MCF 10A (cell line): ENCODE measurements at regions of chr21 and their contacts with region 1.

Region 1: GRCh38 chr21:36630485-36631206 is 68.3 kb upstream of the SIM2 start:
- DNase-seq: peak; percentile 71
- H3K4me3 Mint-ChIP-seq: no peak overlapping the region
- H3K27ac Mint-ChIP-seq: no peak overlapping the region
- H3K4me1 Mint-ChIP-seq: no peaks in the 10 kb centered on the region
- H3K27me3 Mint-ChIP-seq: no peaks in the 10 kb centered on the region
- CTCF ChIP-seq: peak; percentile 86

Region 2: GRCh38 chr21:36288651-36289243 is 341.9 kb before region 1 on chr21:
- CTCF ChIA-PET with region 1: no interaction called
- POLR2A ChIA-PET with region 1: no interaction called
- intact Hi-C with region 1: no loop called
- DNase-seq: no peak
- H3K4me3 Mint-ChIP-seq: no peak overlapping the region
- H3K27ac Mint-ChIP-seq: no peak overlapping the region
- H3K4me1 Mint-ChIP-seq: no peaks in the 10 kb centered on the region
- H3K27me3 Mint-ChIP-seq: no peaks in the 10 kb centered on the region
- CTCF ChIP-seq: no peak

Region 3: GRCh38 chr21:36504067-36505058 is 126.3 kb before region 1 on chr21:
- CTCF ChIA-PET with region 1: interaction called, 12 read pairs
- POLR2A ChIA-PET with region 1: no interaction called
- intact Hi-C with region 1: no loop called
- DNase-seq: peak; percentile 57
- H3K4me3 Mint-ChIP-seq: no peak overlapping the region
- H3K27ac Mint-ChIP-seq: no peak overlapping the region
- H3K4me1 Mint-ChIP-seq: peaks cover 6% of the 10 kb centered on the region
- H3K27me3 Mint-ChIP-seq: no peaks in the 10 kb centered on the region
- CTCF ChIP-seq: peak; percentile 83

Region 4: GRCh38 chr21:36615274-36615964 is 15.2 kb before region 1 on chr21:
- CTCF ChIA-PET with region 1: interaction called, 15 read pairs
- POLR2A ChIA-PET with region 1: no interaction called
- intact Hi-C with region 1: no loop called
- DNase-seq: no peak
- H3K4me3 Mint-ChIP-seq: no peak overlapping the region
- H3K27ac Mint-ChIP-seq: no peak overlapping the region
- H3K4me1 Mint-ChIP-seq: peaks cover 3% of the 10 kb centered on the region
- H3K27me3 Mint-ChIP-seq: peaks cover 69% of the 10 kb centered on the region
- CTCF ChIP-seq: no peak

Region 5: GRCh38 chr21:36684957-36685714 is 54.5 kb after region 1 on chr21:
- CTCF ChIA-PET with region 1: interaction called, 12 read pairs
- POLR2A ChIA-PET with region 1: no interaction called
- intact Hi-C with region 1: no loop called
- DNase-seq: no peak
- H3K4me3 Mint-ChIP-seq: no peak overlapping the region
- H3K27ac Mint-ChIP-seq: no peak overlapping the region
- H3K4me1 Mint-ChIP-seq: no peaks in the 10 kb centered on the region
- H3K27me3 Mint-ChIP-seq: peaks cover 16% of the 10 kb centered on the region
- CTCF ChIP-seq: no peak

Region 6: DNA sequence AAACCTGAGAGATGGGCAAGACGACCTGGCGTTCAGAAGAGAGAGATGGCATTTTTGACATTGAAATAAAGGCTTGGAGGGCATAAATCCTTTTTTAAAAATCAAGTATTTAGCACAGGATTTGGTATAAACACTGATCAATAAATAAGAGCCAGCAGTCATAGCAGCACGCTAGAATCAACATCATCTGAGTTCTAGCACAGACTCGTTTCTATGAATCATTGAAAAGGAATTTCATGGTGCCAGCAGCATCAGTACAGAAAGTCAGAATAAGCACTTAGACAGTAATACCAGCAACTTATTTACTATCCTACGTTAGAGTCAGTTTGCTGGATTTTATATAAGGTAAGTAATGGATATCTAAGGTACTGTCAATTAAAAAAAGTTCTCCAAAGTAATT is 216.5 kb after region 1 on chr21:
- CTCF ChIA-PET with region 1: interaction called, 12 read pairs
- POLR2A ChIA-PET with region 1: no interaction called
- intact Hi-C with region 1: no loop called
- DNase-seq: peak; percentile 68
- H3K4me3 Mint-ChIP-seq: no peak overlapping the region
- H3K27ac Mint-ChIP-seq: peak overlapping the region; percentile 87
- H3K4me1 Mint-ChIP-seq: peaks cover 14% of the 10 kb centered on the region
- H3K27me3 Mint-ChIP-seq: no peaks in the 10 kb centered on the region
- CTCF ChIP-seq: no peak

Region 7: DNA sequence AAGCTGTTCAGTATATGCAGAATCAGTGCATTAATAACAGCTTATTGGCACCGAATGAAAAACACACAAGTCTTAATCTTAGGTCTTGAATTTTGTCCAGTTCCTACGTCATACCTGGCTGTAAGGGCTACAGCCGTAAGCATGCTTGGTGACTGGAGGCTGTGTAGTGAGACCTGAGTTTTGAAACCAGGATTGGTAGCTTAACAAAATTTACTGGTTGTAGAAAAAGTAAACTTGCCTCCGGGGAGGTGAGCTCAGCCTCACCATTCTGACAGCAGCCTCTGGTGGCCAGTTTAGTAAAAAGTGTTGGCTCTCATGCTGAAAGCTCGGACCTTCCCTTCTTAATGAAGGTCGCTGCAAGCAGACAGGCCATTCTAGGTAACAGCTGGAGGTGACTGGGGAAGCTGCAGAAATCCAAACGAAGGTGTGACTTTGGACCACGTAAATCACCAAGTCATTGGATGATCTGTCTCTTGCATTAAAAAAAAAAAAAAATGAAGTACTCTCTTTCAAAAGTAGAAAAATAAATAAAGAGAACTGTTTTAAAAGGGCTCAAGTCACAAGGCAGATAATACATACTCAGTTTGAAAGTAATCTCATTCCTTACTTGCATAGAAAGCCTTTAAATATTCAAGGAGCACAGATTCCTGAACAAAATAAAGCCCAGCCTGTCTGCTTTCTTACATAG is 287.0 kb after region 1 on chr21:
- CTCF ChIA-PET with region 1: interaction called, 70 read pairs
- POLR2A ChIA-PET with region 1: interaction called, 5 read pairs
- intact Hi-C with region 1: loop called (anchors 1 kb)
- DNase-seq: peak; percentile 64
- H3K4me3 Mint-ChIP-seq: no peak overlapping the region
- H3K27ac Mint-ChIP-seq: peak overlapping the region; percentile 31
- H3K4me1 Mint-ChIP-seq: peaks cover 4% of the 10 kb centered on the region
- H3K27me3 Mint-ChIP-seq: no peaks in the 10 kb centered on the region
- CTCF ChIP-seq: peak; percentile 48